ENCODE measurements at regions of chr3 and their contacts with region 1.

Region 1: DNA sequence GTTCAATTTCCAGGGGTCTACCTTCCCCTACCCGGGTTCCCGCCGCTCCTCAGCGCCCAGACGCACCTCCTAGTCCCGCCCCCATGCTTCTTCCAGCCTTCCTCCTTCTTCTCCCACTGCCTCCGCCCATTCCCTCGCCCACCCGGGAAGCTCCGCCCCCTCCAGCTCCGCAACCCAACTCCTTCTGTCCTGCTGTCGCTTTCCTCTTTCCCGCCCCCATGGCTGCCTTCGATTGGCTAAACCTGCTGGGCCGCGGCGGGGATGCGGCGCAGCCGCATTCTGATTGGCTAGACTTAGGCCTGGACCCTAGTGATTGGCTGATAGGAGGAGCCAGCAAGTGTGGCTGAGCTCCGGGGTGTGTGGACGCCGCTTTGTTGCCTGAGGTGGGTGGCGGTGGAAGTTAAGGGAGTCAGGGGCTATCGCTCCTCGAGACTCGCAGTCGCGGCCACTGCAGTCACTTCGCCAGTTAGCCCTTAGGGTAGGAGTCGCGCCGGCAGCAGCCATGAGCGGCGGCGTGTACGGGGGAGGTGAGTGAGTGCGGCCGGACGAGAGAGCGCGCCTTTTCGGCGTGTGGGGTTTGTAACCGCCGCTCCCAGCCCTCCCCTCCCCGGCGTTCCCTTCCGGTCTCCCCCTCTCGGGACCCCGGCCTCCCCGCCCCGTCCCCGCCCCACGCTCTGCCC is at the start of gene ACTL6A:
- DNase-seq: peak; percentile 99
- H3K4me3 ChIP-seq: peak within 1 kb of the TSS; percentile 85
- H3K27ac ChIP-seq: peak within 1 kb of the TSS; percentile 55
- H3K4me1 ChIP-seq: peaks cover 8% of the 10 kb centered on the region
- H3K27me3 ChIP-seq: no peaks in the 10 kb centered on the region
- total RNA-seq, gene ACTL6A: 44.5 and 98.6 TPM in 2 replicates

Region 2: DNA sequence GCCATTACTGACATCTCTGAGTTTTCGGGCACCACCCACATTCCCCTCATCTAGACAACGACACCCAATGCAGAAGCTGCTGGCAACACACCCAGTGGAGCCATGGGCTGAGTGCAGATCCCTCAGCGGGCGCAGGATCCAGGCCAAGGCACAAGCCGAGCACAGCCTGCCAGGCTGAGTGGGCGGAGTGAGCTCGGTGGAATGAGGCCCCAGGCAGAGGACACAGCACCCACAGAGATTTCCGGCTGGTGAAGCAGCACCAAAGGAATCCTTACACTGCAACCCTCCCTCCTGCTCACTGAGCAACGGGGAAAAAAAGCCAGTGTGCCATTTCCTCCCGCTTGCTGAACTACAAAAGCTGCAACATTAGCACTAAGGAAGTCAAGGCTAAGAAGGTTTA is 525.4 kb before region 1 on chr3:
- in situ Hi-C with region 1: loop called (anchors 25 kb)
- DNase-seq: peak; percentile 99
- H3K4me3 ChIP-seq: peak overlapping the region; percentile 58
- H3K27ac ChIP-seq: peak overlapping the region; percentile 87
- H3K4me1 ChIP-seq: peaks cover 53% of the 10 kb centered on the region
- H3K27me3 ChIP-seq: no peaks in the 10 kb centered on the region

Region 3: DNA sequence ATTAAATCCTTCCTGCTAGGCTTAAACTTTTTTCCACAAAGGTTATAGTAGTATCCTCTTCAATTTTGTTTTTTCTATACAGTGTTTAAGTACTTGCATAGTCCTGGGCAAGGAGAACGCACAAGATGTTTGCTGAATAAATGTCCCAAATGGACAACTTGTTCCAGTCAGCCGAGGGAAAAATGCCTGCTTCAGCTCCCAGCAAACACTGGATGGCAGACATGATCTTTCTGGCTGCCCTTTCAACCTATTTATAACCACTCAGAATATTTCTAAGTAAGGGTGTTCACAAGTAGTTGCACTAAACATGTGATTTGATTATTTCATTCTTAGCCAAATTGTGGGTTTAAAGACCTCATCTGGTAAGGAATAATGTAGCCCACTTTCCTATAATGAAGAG is 141.2 kb before region 1 on chr3:
- in situ Hi-C with region 1: loop called (anchors 10 kb)
- DNase-seq: peak; percentile 65
- H3K4me3 ChIP-seq: no peak overlapping the region
- H3K27ac ChIP-seq: 0 out of 2 replicates have a peak overlapping the region, but pooled peaks have one; percentile 7
- H3K4me1 ChIP-seq: peaks cover 17% of the 10 kb centered on the region
- H3K27me3 ChIP-seq: no peaks in the 10 kb centered on the region

Region 4: GRCh38 chr3:179734497-179735281 is 172.0 kb after region 1 on chr3:
- in situ Hi-C with region 1: no loop called
- DNase-seq: no peak
- H3K4me3 ChIP-seq: no peak overlapping the region
- H3K27ac ChIP-seq: no peak overlapping the region
- H3K4me1 ChIP-seq: peaks cover 3% of the 10 kb centered on the region; the same call in 1 of the 2 replicates
- H3K27me3 ChIP-seq: no peaks in the 10 kb centered on the region

Region 5: DNA sequence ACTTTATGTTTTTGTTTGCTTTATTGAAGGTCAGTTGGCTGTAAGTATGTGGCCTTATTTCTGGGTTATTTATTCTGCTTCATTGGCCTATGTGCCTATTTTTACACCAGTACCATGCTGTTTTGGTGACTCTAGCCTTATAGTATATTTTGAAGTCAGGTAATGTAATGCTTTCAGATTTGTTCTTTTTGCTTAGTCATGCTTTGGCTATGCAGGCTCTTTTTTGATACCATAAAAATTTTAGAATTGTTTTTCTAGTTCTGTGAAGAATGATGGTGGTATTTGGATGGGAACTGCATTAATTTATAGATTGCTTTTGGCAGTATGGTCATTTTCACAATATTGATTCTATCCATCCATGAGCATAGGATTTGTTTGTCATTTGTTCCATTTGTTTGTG is 975.8 kb after region 1 on chr3:
- in situ Hi-C with region 1: no loop called
- DNase-seq: no peak
- H3K4me3 ChIP-seq: no peak overlapping the region
- H3K27ac ChIP-seq: no peak overlapping the region
- H3K4me1 ChIP-seq: no peaks in the 10 kb centered on the region
- H3K27me3 ChIP-seq: no peaks in the 10 kb centered on the region